ENCODE measurements at regions of chr2 and their contacts with region 1.

Region 1: GRCh38 chr2:70124983-70125480 is 37.8 kb downstream of the PCBP1 start:
- DNase-seq: peak; percentile 76
- ATAC-seq: peak; percentile 62
- H3K4me3 Mint-ChIP-seq: peak overlapping the region; percentile 85
- H3K27ac Mint-ChIP-seq: peak overlapping the region; percentile 94
- H3K4me1 Mint-ChIP-seq: peaks cover 54% of the 10 kb centered on the region
- H3K27me3 Mint-ChIP-seq: no peaks in the 10 kb centered on the region

Region 2: DNA sequence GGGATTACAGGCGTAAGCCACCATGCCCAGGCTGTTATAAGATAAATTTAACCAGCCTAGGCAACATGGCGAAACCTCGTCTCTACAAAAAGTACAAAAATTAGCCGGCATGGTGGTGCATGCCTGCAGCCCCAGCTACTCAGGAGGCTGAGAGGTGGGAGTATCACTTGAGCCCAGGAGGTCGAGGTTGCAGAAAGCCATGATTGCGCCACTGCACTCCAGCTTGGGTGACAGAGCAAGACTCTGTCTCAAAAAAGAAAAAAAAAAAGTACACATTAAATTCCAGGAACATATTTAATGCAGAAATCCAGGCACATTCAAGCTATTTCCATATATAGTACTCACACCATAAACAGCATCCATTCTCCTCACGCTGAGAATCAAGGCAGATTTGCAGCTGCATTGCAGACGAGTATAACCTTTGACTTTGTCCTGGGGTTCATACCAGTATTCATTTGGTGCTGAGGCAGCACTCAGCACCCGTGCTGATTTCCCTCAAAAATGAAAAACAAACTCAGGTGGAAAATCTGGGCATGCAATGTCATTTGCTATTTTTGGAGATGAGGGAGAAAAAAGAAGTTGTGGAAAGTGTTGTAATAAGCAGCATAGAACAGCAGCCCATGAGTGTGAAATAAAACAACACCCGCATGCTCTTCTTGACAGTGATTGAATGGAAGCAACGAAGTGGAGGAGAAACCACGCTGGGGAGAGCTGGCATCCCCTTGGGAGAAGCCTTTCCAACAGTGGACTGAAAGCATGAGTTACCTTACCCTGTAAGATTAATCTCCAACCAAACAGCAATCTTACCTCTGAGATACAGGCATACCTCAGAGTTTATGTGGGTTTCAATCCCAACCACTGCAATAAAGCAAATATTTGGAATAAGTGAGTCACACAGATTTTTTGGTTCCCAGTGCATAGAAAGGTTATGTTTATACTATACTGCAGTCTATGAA is 429.9 kb before region 1 on chr2:
- POLR2A ChIA-PET with region 1: no interaction called
- DNase-seq: no peak
- ATAC-seq: no peak
- H3K4me3 Mint-ChIP-seq: peak overlapping the region; percentile 3
- H3K27ac Mint-ChIP-seq: no peak overlapping the region
- H3K4me1 Mint-ChIP-seq: peaks cover 50% of the 10 kb centered on the region
- H3K27me3 Mint-ChIP-seq: no peaks in the 10 kb centered on the region

Region 3: GRCh38 chr2:70070541-70071268 is 54.3 kb before region 1 on chr2:
- POLR2A ChIA-PET with region 1: interaction called, 10 read pairs
- DNase-seq: no peak
- ATAC-seq: peak; percentile 76
- H3K4me3 Mint-ChIP-seq: peak overlapping the region; percentile 77
- H3K27ac Mint-ChIP-seq: peak overlapping the region; percentile 96
- H3K4me1 Mint-ChIP-seq: peaks cover 40% of the 10 kb centered on the region
- H3K27me3 Mint-ChIP-seq: no peaks in the 10 kb centered on the region

Region 4: DNA sequence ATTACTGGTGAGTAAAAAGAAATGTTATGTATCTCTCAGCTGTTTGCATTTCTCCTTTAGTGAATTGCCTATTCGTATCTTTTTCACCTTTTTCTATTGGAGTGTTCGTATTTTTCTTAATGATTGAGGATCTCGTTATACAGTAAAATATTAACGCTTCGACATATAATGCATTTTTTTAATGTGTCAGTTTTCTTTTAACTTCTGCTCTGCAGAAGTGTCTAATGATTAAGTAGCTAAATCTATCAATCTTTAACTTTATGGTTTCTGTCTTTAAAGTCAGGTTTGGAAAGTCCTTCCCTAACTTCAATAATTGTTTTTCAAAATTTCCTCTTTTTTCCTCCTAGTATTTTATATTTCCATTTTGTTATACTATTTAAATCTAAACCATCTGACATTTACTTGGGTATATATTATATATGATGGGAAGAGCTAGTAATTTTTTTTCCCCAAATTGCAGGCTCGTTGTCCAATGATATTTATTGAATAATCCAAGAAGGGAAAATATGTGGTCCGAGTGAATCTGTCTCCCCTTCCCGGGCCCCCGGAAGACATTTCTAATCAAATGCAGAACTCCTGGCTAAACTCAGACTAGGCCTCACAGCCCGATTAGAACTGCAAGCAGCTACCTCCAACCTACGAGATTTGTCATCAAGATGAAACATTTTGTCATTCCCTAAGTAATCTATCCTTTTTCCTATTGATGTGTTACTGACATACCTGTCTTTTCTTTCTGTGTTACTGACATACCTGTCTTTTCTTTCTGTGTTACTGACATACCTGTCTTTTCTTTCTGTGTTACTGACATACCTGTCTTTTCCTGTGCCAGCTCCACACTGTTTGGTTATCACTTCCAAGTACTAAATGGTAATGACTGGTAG is 20.6 kb before region 1 on chr2:
- POLR2A ChIA-PET with region 1: interaction called, 114 read pairs
- DNase-seq: no peak
- ATAC-seq: no peak
- H3K4me3 Mint-ChIP-seq: peak overlapping the region; percentile 85
- H3K27ac Mint-ChIP-seq: peak overlapping the region; percentile 96
- H3K4me1 Mint-ChIP-seq: peaks cover 50% of the 10 kb centered on the region
- H3K27me3 Mint-ChIP-seq: no peaks in the 10 kb centered on the region

Region 5: DNA sequence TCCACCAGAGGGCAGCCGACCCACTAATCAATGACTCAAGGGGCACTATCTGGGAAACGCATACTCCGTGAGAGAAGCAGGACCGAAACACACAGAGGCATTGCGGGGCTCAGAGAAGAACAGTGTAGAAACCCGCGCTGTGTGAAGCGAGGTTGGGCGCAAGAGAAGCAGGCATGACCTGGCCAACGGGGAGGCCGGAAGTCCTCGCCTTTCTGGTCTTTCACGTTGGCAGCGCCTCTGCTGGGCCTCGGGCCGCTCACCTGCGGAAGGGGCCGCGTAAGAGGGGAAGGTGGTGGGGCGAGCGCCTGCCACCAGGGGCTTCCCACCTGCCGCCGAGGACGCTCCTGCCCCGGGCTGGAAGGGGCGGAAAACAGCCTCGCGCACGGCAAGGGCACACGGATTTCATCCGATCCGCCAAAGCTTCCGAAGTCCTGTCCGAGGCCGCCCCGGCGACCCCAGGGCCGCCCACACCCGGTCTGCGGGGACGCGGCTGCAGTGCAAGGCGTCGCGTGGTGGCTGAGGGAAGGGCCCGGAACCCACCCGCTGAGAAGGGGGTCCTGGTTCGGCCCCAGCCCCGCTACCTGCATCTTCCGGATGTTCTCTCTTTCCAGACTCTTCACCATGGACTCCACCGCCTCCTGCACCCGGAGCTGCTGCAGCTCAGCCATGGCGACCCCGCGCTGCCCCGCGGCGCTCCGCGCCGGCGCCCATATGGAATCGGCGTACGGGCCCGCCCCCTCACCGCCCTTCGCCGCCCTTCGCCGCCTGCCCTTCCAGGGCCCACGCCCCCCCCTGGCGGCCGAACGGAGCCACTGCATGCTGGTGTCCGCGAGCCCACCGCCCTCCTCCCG is 176.5 kb after region 1 on chr2 and contains the start of gene FAM136A:
- POLR2A ChIA-PET with region 1: no interaction called
- DNase-seq: peak; percentile 95
- ATAC-seq: peak; percentile 88
- H3K4me3 Mint-ChIP-seq: peak within 1 kb of the TSS; percentile 87
- H3K27ac Mint-ChIP-seq: peak within 1 kb of the TSS; percentile 94
- H3K4me1 Mint-ChIP-seq: peaks cover 23% of the 10 kb centered on the region
- H3K27me3 Mint-ChIP-seq: no peaks in the 10 kb centered on the region
- total RNA-seq, gene FAM136A: 34.8 to 36.3 TPM

Measured in activated naive CD8-positive, alpha-beta T cell treated with anti-CD3 and anti-CD28 coated beads, Interleukin-2, amount 10 ng/mL, durations not matched to agents 7 days and 5 days (primary cell).